Activated naive CD4-positive, alpha-beta T cell treated with anti-CD3 and anti-CD28 coated beads for 36 hours (primary cell): ENCODE measurements at regions of chr5 and their contacts with region 1.

Region 1: DNA sequence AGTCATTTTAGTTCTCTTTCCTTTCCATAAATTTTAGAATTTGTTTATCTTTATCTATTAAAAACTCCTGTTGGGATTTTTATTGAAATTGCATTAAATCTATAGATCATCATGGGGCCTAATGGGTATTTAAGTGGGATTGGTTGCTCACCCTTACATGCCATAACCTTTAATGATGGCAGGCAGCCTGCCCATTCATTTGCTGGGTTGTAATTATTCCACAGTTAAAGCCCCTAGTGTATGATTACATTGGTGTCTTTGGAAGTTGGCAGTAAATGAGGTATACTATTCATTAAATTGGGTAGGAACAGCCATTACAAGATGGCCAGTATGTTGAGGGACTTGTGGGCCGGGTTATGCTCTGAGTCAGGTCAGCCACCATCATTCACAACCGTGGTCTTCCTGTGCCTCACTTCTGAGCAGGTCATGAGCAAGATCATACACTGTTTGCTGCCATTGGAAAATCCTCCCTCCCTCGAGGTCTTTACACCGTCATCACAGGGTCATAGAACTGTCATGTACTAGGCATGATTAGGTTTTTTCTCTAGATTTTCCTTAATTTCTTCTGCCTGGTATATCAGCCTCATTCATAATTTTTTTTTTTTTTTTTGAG is 59.5 kb downstream of the CYSTM1 start:
- DNase-seq: no peak
- H3K4me3 Mint-ChIP-seq: no peak overlapping the region
- H3K27ac Mint-ChIP-seq: no peak overlapping the region
- H3K4me1 Mint-ChIP-seq: no peaks in the 10 kb centered on the region
- H3K27me3 Mint-ChIP-seq: no peaks in the 10 kb centered on the region

Region 2: GRCh38 chr5:140611020-140611521 is 376.6 kb after region 1 on chr5:
- CTCF ChIA-PET with region 1: no interaction called
- intact Hi-C with region 1: loop called (anchors 5 kb)
- DNase-seq: no peak
- H3K4me3 Mint-ChIP-seq: no peak overlapping the region
- H3K27ac Mint-ChIP-seq: no peak overlapping the region
- H3K4me1 Mint-ChIP-seq: peaks cover 13% of the 10 kb centered on the region
- H3K27me3 Mint-ChIP-seq: peaks cover 10% of the 10 kb centered on the region